ENCODE measurements at regions of chr1 and their contacts with region 1.

Region 1: DNA sequence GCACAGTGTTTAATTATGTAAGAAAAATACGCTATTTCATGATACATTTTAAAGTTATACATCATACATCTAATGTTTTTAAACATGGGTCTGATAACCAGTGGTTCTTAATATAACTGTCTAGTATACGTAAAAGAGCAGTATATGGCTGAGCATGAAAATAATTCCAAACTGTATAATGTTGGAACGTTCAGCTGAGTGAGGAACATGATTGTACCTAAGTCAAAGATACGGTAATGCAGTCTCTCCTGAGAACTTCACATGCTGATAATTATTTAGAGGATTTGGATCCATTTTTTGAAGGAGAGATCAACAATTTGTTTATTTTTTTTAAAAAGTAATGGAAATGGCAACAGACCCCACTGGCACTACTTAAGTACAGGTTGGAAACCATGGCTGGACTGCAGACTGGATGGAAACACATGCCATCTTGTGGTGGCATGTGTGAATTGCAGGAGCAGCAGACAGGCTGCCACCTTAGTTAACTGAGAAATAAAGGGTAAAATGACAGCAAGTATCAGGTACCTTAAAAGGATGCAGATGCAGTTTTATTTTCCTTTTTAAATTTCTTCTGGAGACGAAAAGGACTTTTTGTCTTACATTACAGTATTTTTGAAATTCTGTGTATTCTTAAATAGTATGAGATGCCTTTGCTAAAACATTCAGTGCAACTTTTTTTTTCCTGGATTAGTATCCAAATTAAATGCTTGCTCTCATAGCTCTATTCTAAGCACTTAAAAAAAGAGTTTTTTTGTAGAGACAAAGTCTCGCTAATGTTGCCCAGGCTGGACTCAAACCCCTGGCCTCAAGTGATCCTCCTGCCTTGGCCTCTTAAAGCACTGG is 73.8 kb downstream of the MTR start:
- DNase-seq: peak in 1 of 2 experiments; percentile 27
- H3K4me3 ChIP-seq: no peak overlapping the region
- H3K27ac ChIP-seq: no peak overlapping the region
- H3K4me1 ChIP-seq: no peaks in the 10 kb centered on the region
- H3K27me3 ChIP-seq: no peaks in the 10 kb centered on the region
- CTCF ChIP-seq: peak; percentile 74 to 95 (median 78)
- EP300 ChIP-seq: no peak
- POLR2A ChIP-seq: no peak
- RAD21 ChIP-seq: peak; percentile 84 to 86

Region 2: DNA sequence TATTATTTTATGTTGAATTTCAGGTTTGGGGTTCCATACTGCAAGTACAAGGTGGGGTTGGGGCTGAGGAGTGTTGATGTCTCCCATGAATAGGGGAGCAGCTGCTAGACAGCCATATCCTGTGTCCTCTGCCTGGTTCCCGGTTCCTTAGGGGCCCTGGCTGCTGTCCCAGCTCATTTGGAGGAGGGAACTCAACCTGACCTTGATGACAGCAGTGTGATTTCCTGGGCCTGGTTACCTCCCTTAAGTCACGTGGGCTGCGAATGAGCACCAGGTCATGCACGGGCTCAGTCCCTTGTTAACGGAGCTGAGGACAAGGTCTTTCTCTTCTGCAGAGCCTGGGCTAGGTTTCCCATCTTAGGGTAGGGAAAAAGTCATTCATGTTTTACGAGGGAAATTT is 11.4 kb after region 1 on chr1:
- CTCF ChIA-PET with region 1: interaction called, 10 read pairs
- POLR2A ChIA-PET with region 1: no interaction called
- DNase-seq: no peak
- H3K4me3 ChIP-seq: no peak overlapping the region
- H3K27ac ChIP-seq: no peak overlapping the region
- H3K4me1 ChIP-seq: no peaks in the 10 kb centered on the region
- H3K27me3 ChIP-seq: no peaks in the 10 kb centered on the region
- CTCF ChIP-seq: no peak
- EP300 ChIP-seq: no peak
- POLR2A ChIP-seq: no peak
- RAD21 ChIP-seq: no peak

Region 3: DNA sequence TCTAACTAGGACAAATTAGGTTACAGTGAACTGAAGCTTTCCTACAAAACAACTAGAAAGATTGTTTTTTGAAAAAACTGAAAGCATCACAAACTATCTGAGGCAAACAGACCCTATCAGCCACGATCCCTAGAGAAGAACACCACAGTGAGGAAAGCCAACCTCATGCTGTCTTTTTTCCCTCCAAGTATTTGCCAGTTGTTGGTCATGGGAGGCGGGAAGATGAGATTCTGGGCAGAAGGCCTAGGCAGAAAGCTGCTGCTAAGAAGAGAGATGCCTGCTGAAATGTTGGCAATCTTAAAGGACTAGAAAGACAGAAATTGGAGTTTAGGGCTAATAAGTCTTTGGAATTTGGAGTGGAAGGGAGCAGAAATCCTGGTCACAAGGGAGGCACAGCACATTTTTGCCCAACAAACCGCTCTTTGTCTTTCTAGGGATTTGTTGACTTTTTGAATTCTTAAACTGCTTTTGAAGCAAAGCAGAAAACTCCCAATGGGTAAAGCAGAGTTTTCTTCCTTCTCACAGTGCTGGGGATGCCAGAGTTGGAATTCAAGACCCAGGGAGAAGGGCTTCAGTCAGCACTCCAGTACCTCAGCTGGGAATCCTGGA is 51.5 kb after region 1 on chr1:
- CTCF ChIA-PET with region 1: no interaction called
- POLR2A ChIA-PET with region 1: no interaction called
- DNase-seq: no peak
- H3K4me3 ChIP-seq: no peak overlapping the region
- H3K27ac ChIP-seq: no peak overlapping the region
- H3K4me1 ChIP-seq: no peaks in the 10 kb centered on the region
- H3K27me3 ChIP-seq: no peaks in the 10 kb centered on the region
- CTCF ChIP-seq: no peak
- EP300 ChIP-seq: no peak
- POLR2A ChIP-seq: no peak
- RAD21 ChIP-seq: no peak